Ascending aorta (tissue), 2 donors: ENCODE measurements at regions of chr6 and their contacts with region 1.

Region 1: DNA sequence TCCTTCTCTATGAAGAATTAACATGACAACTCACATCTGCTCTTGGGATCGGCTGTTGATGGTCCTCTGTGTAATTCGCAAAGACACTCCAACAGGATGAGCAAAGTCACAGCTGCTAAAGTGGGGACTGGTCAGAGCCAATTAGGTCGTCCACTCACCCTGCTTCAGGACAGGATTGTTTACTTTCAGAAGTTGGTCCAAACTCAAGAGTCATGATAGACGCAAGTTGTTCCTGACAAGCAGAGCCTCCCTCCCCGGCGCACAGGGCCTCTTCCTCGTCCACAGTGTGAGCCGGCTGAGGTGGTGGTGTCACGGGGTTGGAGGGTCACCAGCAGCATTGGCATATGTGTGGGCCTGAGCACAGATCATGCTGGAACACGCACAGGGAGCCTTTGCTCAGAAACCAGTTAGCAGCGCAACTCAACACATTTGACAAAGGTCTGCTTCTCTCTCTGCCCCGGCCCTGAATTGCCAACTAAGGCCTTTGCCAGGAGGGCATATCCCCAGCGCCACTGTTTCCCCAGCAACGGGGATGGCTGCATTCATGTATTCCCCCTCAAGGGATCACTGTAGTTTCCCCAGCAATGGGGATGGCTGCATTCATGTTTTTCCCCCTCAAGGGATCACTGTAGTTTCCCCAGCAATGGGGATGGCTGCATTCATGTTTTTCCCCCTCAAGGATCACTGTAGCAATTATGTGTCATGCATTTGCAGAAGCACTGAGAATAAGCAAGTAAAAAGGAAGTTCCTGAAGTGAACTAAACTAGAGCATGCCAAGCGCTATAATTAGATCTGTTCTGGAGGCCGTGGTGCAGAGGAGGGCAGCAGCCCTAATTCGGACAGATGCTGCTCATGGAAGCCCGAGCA is 111.7 kb downstream of the THBS2 start:
- DNase-seq: no peak
- H3K4me3 ChIP-seq: no peak overlapping the region
- H3K27ac ChIP-seq: peak overlapping the region; percentile 78 to 85
- H3K4me1 ChIP-seq: peaks cover 3 to 27% of the 10 kb centered on the region in 2 donors
- H3K27me3 ChIP-seq: no peaks in the 10 kb centered on the region
- CTCF ChIP-seq: no peak

Region 2: DNA sequence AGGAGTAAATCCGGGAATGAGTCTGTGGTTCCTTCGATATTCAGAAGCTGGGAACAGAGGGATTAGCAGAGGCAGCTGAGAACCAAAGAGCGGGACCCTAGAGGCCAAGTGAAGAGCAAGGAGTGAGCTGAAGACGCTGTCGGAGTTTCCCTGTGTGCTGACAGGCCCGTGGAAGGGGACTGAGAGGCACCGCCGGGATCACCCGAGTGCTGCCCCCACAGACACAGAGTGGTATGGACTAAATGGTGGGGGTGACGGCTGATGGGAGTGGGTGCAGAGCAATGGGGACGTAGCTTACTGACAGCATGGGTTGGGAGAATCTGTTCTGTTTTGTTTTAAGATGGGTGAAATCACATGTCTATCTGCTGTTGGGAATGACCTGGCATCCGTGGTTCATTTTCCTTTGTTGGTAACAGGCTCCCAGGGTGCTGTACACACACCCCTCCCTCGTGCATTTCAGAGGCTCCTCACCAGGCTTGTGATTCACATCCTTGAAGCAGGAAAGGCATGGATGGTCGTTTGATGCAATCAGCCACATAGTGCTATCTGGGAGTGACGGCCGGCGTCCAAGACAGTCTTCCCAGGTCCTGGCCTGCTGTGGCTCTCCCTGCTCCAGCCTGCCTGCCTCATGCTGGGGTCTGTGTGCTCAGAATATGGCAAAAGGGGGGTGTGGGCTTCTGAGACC is 14.3 kb after region 1 on chr6:
- intact Hi-C with region 1: loop called (anchors 2 kb)
- DNase-seq: peak in 1 of 2 donors; percentile 71
- H3K4me3 ChIP-seq: no peak overlapping the region
- H3K27ac ChIP-seq: peak overlapping the region in 1 of 2 donors; percentile 20
- H3K4me1 ChIP-seq: peaks cover 6 to 16% of the 10 kb centered on the region in 2 donors
- H3K27me3 ChIP-seq: no peaks in the 10 kb centered on the region
- CTCF ChIP-seq: no peak